ENCODE measurements at regions of chr1 and their contacts with region 1.

Region 1: DNA sequence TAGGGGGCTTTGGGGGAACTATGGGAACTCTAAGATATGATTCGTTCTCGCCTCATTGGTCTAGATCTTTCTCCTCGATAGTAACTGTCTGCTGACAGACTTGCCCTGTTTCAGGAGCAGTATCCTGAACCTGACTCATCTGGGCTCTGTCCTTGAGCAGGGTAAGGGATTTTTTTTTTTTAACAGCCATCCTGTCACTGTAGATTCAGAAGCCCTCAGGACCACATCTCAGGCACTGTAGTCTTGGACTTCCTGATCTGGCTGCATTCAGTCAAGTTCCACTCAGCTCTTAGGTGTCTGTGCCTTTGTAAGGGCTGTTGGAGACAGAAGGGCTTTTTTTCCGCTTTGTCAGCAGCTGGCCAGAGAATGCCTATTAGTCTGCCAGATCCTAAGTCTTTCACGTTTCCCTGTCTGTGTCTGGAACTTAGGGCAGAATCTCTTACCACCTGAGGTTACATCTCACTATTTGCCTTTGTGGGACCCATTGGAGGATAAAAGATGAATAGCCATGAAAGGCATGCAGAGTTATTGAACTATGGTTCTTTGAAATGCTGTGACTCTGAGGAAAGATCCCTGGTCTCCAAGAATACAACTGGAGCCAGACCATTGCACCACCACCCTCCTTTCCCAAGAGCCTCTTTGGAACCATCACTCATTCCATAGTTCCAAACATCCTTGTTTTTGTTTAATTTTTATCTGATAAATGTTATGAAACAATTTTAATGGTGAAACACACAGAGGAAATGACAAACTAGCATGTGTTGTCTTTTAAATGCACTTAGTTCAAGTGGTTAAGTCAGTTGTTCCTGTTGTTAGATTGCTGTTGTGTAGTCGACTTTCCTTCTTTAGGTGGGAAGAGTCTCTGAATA is 49.7 kb upstream of the MACF1 start:
- DNase-seq: peak in 1 of 2 donors; percentile 62
- ATAC-seq: peak; percentile 85
- H3K4me3 ChIP-seq: no peak overlapping the region
- H3K27ac ChIP-seq: peak overlapping the region in 1 of 2 donors; percentile 54
- H3K4me1 ChIP-seq: peaks cover 25 to 30% of the 10 kb centered on the region in 2 donors
- H3K27me3 ChIP-seq: no peaks in the 10 kb centered on the region

Region 2: GRCh38 chr1:38018864-38019343 is 1135.9 kb before region 1 on chr1:
- intact Hi-C with region 1: no loop called
- DNase-seq: peak in 1 of 2 donors; percentile 0
- ATAC-seq: no peak
- H3K4me3 ChIP-seq: no peak overlapping the region
- H3K27ac ChIP-seq: no peak overlapping the region
- H3K4me1 ChIP-seq: peaks cover 0 to 4% of the 10 kb centered on the region in 2 donors
- H3K27me3 ChIP-seq: no peaks in the 10 kb centered on the region

Region 3: GRCh38 chr1:39081266-39082009 is 73.3 kb before region 1 on chr1:
- intact Hi-C with region 1: no loop called
- DNase-seq: peak; percentile 60 to 79
- ATAC-seq: no peak
- H3K4me3 ChIP-seq: peak overlapping the region; percentile 60 to 87
- H3K27ac ChIP-seq: no peak overlapping the region
- H3K4me1 ChIP-seq: no peaks in the 10 kb centered on the region
- H3K27me3 ChIP-seq: no peaks in the 10 kb centered on the region

Region 4: GRCh38 chr1:39116868-39117728 is 37.7 kb before region 1 on chr1:
- intact Hi-C with region 1: loop called in 1 of 2 experiments (anchors 5 kb)
- DNase-seq: no peak
- ATAC-seq: no peak
- H3K4me3 ChIP-seq: no peak overlapping the region
- H3K27ac ChIP-seq: no peak overlapping the region
- H3K4me1 ChIP-seq: peaks cover 8 to 13% of the 10 kb centered on the region in 2 donors
- H3K27me3 ChIP-seq: no peaks in the 10 kb centered on the region